ENCODE measurements at regions of chr12 and their contacts with region 1.

Region 1: GRCh38 chr12:110280779-110281548 is at the start of gene ATP2A2:
- DNase-seq: peak; percentile 55
- H3K4me3 ChIP-seq: peak within 1 kb of the TSS; percentile 90
- H3K27ac ChIP-seq: peak within 1 kb of the TSS; percentile 69
- H3K27me3 ChIP-seq: no peaks in the 10 kb centered on the region
- CTCF ChIP-seq: no peak
- polyA plus RNA-seq, gene ATP2A2: 139 and 143 TPM in 2 replicates

Region 2: DNA sequence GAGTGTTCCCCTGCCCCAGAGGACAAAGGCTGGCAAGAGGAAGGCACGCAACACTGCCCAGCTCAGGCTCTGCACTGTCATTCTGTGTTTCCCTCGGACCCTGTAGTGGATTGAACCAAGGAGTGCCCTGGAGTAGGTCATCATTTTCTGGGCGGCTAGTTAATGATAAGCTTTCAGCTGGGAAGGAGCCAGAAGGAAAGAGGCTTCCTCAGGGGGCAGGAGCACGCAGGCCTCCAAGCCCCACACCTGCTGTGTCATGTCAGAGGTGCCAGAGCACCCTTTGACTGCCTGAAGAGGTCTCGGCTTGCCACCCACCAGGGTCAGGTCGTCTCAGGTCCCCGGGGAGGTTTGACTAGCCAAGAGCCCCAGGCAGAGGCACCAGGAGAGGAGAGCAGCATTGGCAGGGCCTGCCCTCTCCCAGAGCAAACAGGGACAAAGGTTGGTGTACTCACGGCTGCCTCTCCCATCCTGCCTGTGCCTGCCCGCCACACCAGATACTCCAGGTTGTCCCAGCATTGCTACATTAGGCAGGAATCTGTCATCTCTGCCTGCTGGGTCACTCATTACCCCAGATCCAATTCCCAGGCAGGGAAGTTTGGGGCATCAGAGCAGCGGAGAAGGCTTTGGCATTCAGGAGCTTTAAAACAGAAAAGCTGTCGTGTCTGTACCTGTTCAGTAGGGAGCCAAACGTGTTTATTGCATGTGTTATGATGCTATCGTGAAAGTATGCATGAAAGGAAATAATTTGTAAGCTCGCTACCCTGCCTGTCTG is 33.4 kb before region 1 on chr12:
- CTCF ChIA-PET with region 1: no interaction called
- POLR2A ChIA-PET with region 1: interaction called, 14 read pairs
- DNase-seq: no peak
- H3K4me3 ChIP-seq: no peak overlapping the region
- H3K27ac ChIP-seq: no peak overlapping the region
- H3K27me3 ChIP-seq: no peaks in the 10 kb centered on the region
- CTCF ChIP-seq: no peak

Region 3: GRCh38 chr12:110270125-110270962 is 10.6 kb before region 1 on chr12:
- CTCF ChIA-PET with region 1: interaction called, 4 read pairs
- POLR2A ChIA-PET with region 1: interaction called, 40 read pairs
- DNase-seq: peak; percentile 42
- H3K4me3 ChIP-seq: no peak overlapping the region; the same call in 1 of the 2 replicates
- H3K27ac ChIP-seq: peak overlapping the region; percentile 87
- H3K27me3 ChIP-seq: no peaks in the 10 kb centered on the region
- CTCF ChIP-seq: no peak

Region 4: DNA sequence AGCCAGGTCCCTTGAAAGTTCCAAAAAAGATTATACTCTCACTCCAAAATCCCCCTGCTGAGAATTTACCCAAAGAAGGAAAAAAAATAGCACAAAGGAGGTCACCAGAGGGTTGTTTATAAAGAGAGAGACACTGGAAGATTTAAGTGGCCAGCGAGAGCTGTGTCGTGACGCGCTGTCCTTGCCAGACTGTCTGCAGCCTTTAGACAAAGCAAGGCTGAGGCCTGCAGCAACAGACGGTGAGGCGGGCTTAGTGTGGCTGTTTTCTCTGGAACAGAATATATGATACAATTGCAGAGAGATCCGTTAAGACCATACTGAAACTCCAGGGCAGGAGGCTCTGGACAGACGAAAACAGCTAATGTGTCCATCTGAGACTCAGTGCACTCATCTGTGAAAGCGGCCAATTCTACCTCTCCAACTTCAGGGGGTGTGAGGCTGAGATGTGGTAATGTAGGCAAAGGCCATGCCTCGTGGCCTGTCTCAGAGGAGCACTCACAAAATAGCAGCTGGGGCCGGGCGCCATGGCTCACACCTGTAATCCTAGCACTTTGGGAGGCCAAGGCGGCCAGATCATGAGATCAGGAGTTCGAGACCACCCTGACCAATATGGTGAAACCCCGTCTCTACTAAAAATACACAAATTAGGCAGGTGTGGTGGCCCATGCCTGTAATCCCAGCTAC is 86.4 kb after region 1 on chr12:
- CTCF ChIA-PET with region 1: no interaction called
- POLR2A ChIA-PET with region 1: no interaction called
- DNase-seq: no peak
- H3K4me3 ChIP-seq: no peak overlapping the region
- H3K27ac ChIP-seq: no peak overlapping the region
- H3K27me3 ChIP-seq: no peaks in the 10 kb centered on the region
- CTCF ChIP-seq: no peak